G401 (cell line): ENCODE measurements at regions of chr16 and their contacts with region 1.

Region 1: DNA sequence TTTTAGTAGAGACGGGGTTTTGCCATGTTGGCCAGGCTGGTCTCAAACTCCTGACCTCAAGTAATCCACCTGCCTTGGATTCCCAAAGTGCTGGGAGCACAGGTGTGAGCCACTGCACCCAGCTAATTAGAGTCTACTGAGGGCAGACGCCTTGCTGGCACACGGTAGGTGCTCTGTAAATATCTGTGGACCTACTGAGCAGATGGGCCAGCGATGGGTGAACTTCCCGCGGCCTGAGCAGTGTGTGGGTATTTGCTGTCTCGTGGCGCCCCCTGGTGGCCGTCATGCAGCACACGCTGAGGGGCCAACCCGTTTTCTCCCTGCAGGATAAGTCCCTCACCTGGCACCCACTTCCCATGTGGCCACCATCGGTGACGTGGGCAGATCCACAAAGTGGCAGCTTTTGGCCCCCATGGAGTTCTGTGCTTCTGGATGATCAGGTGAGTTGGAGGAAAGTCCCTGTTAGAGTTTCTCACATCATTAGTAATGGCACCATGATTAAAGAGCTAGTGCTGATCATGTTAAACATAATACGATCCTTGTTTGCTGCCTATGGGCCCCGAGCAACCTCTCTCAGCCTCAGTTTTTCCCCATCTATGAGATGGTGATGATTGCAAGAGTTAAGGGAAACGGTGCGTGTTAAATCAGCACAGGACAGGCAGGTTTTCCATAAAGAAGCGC is 40.7 kb downstream of the ZDHHC7 start:
- DNase-seq: peak; percentile 84

Region 2: GRCh38 chr16:84741340-84741830 is 229.2 kb before region 1 on chr16:
- in situ Hi-C with region 1: loop called (anchors 10 kb)
- DNase-seq: peak; percentile 46